ENCODE measurements at regions of chr4 and their contacts with region 1.

Region 1: DNA sequence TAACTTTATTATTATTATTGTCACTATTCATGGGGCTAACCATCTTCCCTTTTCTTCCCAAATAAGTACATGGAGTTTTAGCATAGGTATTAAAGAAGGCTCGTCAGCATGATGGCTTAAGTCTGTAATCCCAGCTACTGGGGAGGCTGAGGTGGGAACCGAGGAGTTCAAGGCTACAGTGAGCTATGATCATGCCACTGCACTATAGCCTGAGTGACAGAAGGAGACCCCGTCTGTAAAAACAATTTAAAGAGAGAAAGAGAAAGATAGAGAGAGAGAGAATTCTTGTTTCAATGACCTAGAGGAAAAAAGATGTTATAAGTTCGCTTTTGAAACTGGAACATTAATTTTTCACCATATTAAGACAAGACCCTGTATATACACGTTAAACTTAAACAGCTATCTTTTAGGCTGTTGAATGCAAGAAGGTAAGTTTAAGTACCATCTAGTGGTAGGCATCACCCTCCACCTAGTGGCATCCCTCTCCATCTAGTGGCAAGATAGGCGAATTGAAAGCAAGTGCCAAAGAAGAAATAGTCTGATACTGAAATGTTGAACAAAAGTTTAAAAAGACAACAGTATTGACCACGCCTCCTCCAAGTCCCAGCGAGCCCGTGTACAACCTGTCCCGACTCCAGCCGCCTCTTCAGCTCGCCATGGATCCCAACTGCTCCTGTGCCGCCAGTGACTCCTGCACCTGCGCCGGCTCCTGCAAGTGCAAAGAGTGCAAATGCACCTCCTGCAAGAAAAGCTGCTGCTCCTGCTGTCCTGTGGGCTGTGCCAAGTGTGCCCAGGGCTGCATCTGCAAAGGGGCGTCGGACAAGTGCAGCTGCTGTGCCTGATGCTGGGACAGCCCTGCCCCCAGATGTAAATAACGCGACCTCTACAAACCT is 26.0 kb upstream of the YTHDC1 start:
- DNase-seq: peak; percentile 65
- H3K4me3 ChIP-seq: peak overlapping the region in 1 of 2 experiments; percentile 37; a peak in 3 of 4 replicates
- H3K27ac ChIP-seq: no peak overlapping the region
- H3K4me1 ChIP-seq: no peaks in the 10 kb centered on the region; a peak in 1 of 4 replicates
- H3K27me3 ChIP-seq: peaks cover 7% of the 10 kb centered on the region; the same call in 1 of the 2 replicates
- CTCF ChIP-seq: peak; percentile 84
- EP300 ChIP-seq: no peak
- RAD21 ChIP-seq: peak; percentile 91

Region 2: GRCh38 chr4:68257719-68258118 is 118.2 kb before region 1 on chr4:
- CTCF ChIA-PET with region 1: interaction called, 15 read pairs
- POLR2A ChIA-PET with region 1: no interaction called
- DNase-seq: no peak
- H3K4me3 ChIP-seq: no peak overlapping the region
- H3K27ac ChIP-seq: no peak overlapping the region
- H3K4me1 ChIP-seq: no peaks in the 10 kb centered on the region
- H3K27me3 ChIP-seq: peaks cover 4% of the 10 kb centered on the region; the same call in 1 of the 2 replicates
- CTCF ChIP-seq: no peak
- EP300 ChIP-seq: no peak
- RAD21 ChIP-seq: no peak

Region 3: DNA sequence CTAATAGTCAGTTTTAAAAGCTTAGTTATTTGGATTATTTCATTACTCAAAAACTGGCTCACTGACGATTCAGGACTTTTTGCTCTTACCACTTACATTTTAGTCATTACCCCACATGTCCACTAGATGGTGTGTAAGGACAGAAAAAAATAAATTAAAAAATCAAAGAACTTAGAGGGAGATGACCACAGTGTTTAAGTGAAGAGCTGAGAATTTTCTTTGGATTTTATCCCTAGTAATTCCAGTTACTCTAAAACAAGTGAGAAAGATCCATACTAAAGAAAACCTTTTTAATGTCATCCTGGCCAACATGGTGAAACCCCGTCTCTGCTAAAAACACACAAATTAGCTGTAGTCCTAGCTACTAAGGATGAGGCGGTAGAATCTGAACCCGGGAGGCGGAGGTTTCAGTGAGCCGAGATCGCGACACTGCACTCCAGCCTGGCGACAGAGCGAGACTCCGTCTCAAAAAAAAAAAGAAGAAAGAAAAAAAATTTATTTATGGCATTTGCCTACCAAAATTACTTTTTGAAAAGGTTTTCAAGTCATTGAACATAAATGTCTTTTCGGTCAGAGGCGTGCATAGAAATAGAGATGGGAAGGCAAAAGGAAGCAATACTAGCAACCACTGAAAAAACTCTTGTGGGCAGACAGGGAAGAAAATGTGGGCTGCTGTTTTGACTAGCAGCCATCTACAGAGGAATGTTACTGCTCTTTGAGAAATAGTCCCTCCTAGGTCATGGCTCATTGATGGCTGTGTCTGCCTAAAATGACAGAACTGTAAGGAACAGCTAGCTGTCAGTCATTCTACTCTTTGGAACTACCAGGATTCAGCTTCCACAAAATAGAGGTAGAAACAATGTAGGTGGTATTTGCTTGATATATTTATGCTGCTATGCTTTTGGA is 103.8 kb before region 1 on chr4:
- CTCF ChIA-PET with region 1: interaction called, 90 read pairs
- POLR2A ChIA-PET with region 1: interaction called, 3 read pairs
- DNase-seq: peak; percentile 46
- H3K4me3 ChIP-seq: peak overlapping the region in 1 of 2 experiments; percentile 36; a peak in 1 of 4 replicates
- H3K27ac ChIP-seq: no peak overlapping the region
- H3K4me1 ChIP-seq: no peaks in the 10 kb centered on the region
- H3K27me3 ChIP-seq: no peaks in the 10 kb centered on the region; the same call in 1 of the 2 replicates
- CTCF ChIP-seq: peak; percentile 76
- EP300 ChIP-seq: no peak
- RAD21 ChIP-seq: peak; percentile 79

Region 4: DNA sequence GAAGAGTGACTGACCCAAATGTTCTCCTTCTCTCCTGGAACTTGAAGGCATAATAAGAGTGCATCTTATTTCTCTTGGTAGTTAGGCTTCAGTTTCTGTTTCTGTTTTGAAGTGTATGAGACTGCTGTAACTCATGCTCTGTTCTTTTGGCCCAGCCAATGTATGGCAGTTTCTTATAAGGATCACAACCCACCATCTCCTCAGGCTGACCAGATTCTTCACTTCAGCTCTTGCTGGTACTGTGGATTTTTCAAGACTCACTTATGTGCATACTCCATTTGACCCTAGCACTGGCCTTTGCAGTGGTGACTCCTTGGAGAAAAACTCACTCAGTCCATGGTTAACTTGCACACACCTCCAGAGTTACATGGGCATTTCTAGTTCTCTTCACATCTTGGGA is 16.4 kb before region 1 on chr4:
- CTCF ChIA-PET with region 1: interaction called, 23 read pairs
- POLR2A ChIA-PET with region 1: no interaction called
- DNase-seq: no peak
- H3K4me3 ChIP-seq: no peak overlapping the region
- H3K27ac ChIP-seq: no peak overlapping the region
- H3K4me1 ChIP-seq: no peaks in the 10 kb centered on the region
- H3K27me3 ChIP-seq: no peaks in the 10 kb centered on the region
- CTCF ChIP-seq: no peak
- EP300 ChIP-seq: no peak
- RAD21 ChIP-seq: no peak